GM12878 (cell line): ENCODE measurements at regions of chr17 and their contacts with region 1.

Region 1: DNA sequence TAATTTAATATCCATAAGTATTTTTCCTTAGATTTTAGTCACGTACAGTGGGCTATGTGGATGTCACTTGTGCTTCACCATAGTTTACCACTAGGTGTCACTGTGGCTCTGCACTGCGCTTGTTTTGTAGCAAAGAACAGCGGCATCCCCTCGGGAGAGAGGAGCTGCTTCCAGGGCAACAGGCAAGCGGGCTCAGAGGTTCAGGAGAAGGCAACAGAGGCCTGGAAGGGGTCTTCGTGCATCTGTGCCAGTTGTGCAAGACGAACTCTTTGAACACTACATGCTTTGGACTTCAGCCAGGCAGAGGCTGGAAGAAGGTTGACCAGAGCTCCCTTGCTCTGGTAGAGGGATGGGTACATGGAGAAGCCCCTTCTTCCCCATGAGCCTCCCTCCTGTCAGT is 20.6 kb downstream of the CYB561 start:
- DNase-seq: peak; percentile 39
- ATAC-seq: peak; percentile 95
- H3K4me3 ChIP-seq: no peak overlapping the region
- H3K27ac ChIP-seq: no peak overlapping the region
- H3K4me1 ChIP-seq: no peaks in the 10 kb centered on the region
- H3K27me3 ChIP-seq: no peaks in the 10 kb centered on the region; a peak in 1 of 4 replicates
- CTCF ChIP-seq: peak; percentile 90 to 97 (median 90)
- EP300 ChIP-seq: no peak
- POLR2A ChIP-seq: no peak
- RAD21 ChIP-seq: peak; percentile 98

Region 2: DNA sequence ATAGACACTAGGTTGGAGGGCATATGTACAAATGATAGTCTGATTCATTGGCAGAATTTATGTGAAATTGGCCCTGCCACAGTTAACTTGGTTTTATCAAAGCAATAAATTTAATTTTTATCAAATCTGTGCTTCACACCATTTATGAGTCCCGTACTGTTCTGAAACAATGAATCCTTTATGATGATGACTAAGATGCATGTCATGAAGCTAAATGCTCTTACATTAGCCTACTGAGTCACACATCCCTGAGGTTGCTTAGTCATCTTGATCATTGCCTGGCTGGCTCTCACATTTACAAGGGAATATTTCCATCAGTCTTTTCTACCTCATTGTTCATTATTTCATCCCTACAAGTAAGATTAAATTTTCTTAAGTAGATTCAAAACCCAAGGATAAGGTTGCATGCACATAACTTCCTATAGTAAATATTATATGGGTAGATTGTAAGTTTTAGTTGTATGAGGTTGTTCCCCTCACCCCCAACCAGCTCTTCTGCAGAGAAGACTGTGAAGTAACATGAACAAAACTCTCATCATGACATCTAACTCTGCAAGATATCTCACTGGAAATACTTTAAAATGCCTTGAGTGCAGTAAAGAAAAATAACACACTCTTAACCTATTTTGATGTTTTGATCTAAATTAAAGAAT is 150.0 kb before region 1 on chr17:
- CTCF ChIA-PET with region 1: no interaction called
- POLR2A ChIA-PET with region 1: no interaction called
- RAD21 ChIA-PET with region 1: no interaction called
- SMC1A ChIA-PET with region 1: no interaction called
- in situ Hi-C with region 1: no loop called
- intact Hi-C with region 1: no loop called
- DNase-seq: no peak
- ATAC-seq: no peak
- H3K4me3 ChIP-seq: no peak overlapping the region
- H3K27ac ChIP-seq: no peak overlapping the region
- H3K4me1 ChIP-seq: peaks cover 7% of the 10 kb centered on the region
- H3K27me3 ChIP-seq: no peaks in the 10 kb centered on the region; a peak in 1 of 4 replicates
- CTCF ChIP-seq: no peak
- EP300 ChIP-seq: no peak
- POLR2A ChIP-seq: no peak
- RAD21 ChIP-seq: no peak

Region 3: GRCh38 chr17:63356337-63356757 is 69.1 kb before region 1 on chr17:
- CTCF ChIA-PET with region 1: no interaction called
- POLR2A ChIA-PET with region 1: no interaction called
- RAD21 ChIA-PET with region 1: no interaction called
- SMC1A ChIA-PET with region 1: no interaction called
- in situ Hi-C with region 1: no loop called
- intact Hi-C with region 1: no loop called
- DNase-seq: no peak
- ATAC-seq: no peak
- H3K4me3 ChIP-seq: no peak overlapping the region
- H3K27ac ChIP-seq: no peak overlapping the region
- H3K4me1 ChIP-seq: no peaks in the 10 kb centered on the region
- H3K27me3 ChIP-seq: peaks cover 0 to 3% of the 10 kb centered on the region in 2 experiments; a peak in 3 of 4 replicates
- CTCF ChIP-seq: no peak
- EP300 ChIP-seq: no peak
- POLR2A ChIP-seq: no peak
- RAD21 ChIP-seq: no peak

Region 4: GRCh38 chr17:63445979-63446691 is 20.7 kb after region 1 on chr17 and contains the start of gene CYB561:
- CTCF ChIA-PET with region 1: interaction called, 42 read pairs
- POLR2A ChIA-PET with region 1: interaction called, 5 read pairs
- RAD21 ChIA-PET with region 1: interaction called, 7 read pairs
- SMC1A ChIA-PET with region 1: interaction called, 5 read pairs
- in situ Hi-C with region 1: no loop called
- intact Hi-C with region 1: no loop called
- DNase-seq: no peak
- ATAC-seq: peak; percentile 87
- H3K4me3 ChIP-seq: peak within 1 kb of the TSS; percentile 80
- H3K27ac ChIP-seq: peak within 1 kb of the TSS; percentile 64; the same call in 1 of the 2 replicates
- H3K4me1 ChIP-seq: peaks cover 14% of the 10 kb centered on the region
- H3K27me3 ChIP-seq: no peaks in the 10 kb centered on the region
- CTCF ChIP-seq: peak; percentile 24 to 50 (median 28); a peak in 2 of 6 replicates
- EP300 ChIP-seq: no peak
- POLR2A ChIP-seq: 0 out of 2 replicates have a peak, but pooled peaks have one; percentile 4
- RAD21 ChIP-seq: no peak
- polyA plus RNA-seq, gene CYB561: 0.52 to 0.93 TPM

Region 5: DNA sequence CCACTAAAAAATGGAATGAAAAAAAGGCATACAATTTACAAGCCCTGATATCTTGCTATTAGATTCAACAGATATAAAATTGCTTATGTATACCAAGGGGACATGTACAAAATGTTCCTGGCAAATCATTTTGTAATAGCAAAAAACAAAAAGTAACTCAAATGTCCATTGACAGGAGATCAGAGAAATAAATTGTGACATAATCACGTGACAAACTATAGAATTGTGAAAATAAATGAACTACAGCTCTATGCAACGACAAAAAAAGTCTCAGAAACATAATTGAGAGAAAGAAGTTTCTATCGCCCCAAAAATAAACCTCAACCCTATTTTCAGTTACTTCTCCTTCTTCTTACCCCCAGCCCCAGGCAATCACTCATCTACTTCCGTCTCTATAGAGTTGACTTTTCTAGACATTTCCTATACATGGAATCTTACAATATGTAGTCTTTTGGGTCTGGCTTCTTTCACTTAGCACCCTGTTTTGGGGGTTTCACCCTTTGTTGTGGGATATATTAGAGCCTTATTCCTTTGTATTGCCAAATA is 39.3 kb after region 1 on chr17:
- CTCF ChIA-PET with region 1: interaction called, 10 read pairs
- POLR2A ChIA-PET with region 1: no interaction called
- RAD21 ChIA-PET with region 1: interaction called, 4 read pairs
- SMC1A ChIA-PET with region 1: no interaction called
- in situ Hi-C with region 1: no loop called
- intact Hi-C with region 1: no loop called
- DNase-seq: no peak
- ATAC-seq: no peak
- H3K4me3 ChIP-seq: no peak overlapping the region
- H3K27ac ChIP-seq: no peak overlapping the region
- H3K4me1 ChIP-seq: peaks cover 16% of the 10 kb centered on the region
- H3K27me3 ChIP-seq: no peaks in the 10 kb centered on the region
- CTCF ChIP-seq: no peak
- EP300 ChIP-seq: no peak
- POLR2A ChIP-seq: no peak
- RAD21 ChIP-seq: no peak

Region 6: DNA sequence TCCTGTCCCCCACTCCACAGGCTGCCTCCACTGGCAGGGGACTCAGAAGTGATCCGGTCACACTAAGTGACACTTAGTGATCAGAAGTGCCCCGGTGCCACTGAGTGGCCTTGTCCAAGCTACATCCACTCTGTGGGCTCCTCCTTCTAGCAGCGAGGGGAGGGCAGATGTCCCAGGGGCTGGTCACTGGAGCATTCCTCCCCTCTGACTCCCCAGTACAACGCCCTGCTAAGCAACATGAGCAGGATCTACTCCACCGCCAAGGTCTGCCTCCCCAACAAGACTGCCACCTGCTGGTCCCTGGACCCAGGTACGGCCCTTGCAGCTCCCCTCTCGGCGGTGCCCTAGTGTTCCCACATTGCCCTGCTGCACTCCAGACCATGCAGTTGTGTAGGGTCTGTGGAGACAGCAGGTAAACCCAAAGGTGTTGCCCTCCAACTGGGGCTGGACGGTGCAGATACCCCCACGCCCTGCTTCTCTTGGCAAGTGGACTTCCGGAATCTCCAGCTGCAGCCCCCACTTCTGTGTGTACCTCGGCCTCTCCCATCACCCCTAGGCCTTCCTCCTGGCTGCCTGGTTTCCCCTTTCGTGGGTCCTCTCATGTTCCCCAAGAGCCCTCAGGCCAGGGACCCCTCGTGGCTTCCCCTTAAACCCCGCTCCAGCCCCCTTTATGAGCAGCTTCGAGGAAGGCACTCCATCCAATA is 53.5 kb after region 1 on chr17:
- CTCF ChIA-PET with region 1: interaction called, 104 read pairs
- POLR2A ChIA-PET with region 1: interaction called, 3 read pairs
- RAD21 ChIA-PET with region 1: interaction called, 75 read pairs
- SMC1A ChIA-PET with region 1: interaction called, 26 read pairs
- in situ Hi-C with region 1: loop called (anchors 5 kb)
- intact Hi-C with region 1: loop called (anchors 1 kb)
- DNase-seq: no peak
- ATAC-seq: peak; percentile 97
- H3K4me3 ChIP-seq: no peak overlapping the region
- H3K27ac ChIP-seq: no peak overlapping the region
- H3K4me1 ChIP-seq: peaks cover 5% of the 10 kb centered on the region
- H3K27me3 ChIP-seq: peaks cover 9 to 13% of the 10 kb centered on the region in 2 experiments
- CTCF ChIP-seq: peak; percentile 85 to 94 (median 86)
- EP300 ChIP-seq: no peak
- POLR2A ChIP-seq: no peak
- RAD21 ChIP-seq: peak; percentile 90

Region 7: DNA sequence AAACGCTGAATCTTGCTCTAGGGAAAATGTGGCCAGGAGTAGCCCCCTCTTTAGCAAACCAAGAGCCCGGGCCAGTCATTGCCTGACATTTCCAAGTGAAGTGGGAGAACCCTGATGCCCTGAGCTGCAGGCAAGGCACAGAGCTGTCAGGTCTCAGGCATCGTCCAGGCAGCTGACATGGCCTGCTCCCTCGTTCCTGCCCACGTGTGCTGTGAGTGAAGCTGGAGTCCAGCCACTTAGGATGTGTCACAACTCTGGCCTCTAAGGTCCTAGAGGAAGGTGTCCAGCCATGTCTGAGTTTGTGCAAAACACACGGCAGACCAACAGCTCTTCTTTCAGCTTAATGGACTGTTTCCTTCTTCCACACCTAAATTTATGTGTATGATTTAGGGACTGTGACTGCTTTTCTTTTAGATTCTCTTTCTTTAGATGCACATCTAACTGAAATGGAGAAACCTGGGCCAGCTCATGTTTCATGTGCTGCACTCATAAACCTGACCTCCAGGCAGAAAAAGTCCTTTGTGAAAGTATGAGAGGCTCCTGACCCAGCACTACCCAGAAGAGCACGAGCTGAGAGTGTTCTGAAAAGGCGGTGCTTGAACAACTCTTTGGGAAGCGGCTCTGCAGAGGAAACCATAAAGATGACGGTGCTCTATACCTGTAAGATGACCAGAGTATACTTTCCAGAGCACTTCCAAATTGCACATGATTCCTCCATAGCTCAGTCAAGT is 289.2 kb after region 1 on chr17:
- CTCF ChIA-PET with region 1: interaction called, 10 read pairs
- POLR2A ChIA-PET with region 1: no interaction called
- RAD21 ChIA-PET with region 1: interaction called, 4 read pairs
- SMC1A ChIA-PET with region 1: no interaction called
- in situ Hi-C with region 1: no loop called
- intact Hi-C with region 1: no loop called
- DNase-seq: no peak
- ATAC-seq: no peak
- H3K4me3 ChIP-seq: no peak overlapping the region
- H3K27ac ChIP-seq: no peak overlapping the region
- H3K4me1 ChIP-seq: no peaks in the 10 kb centered on the region
- H3K27me3 ChIP-seq: no peaks in the 10 kb centered on the region
- CTCF ChIP-seq: no peak
- EP300 ChIP-seq: no peak
- POLR2A ChIP-seq: no peak
- RAD21 ChIP-seq: no peak